CD4-positive, alpha-beta memory T cell (primary cell): ENCODE measurements at regions of chr16 and their contacts with region 1.

Region 1: GRCh38 chr16:10944249-10945064 is at the start of gene CLEC16A:
- DNase-seq: peak; percentile 94 to 97 (median 95)
- H3K4me3 ChIP-seq: peak within 1 kb of the TSS; percentile 81 to 89
- H3K4me3 Mint-ChIP-seq: peak within 1 kb of the TSS; percentile 83 to 96 (median 90)
- H3K27ac ChIP-seq: peak within 1 kb of the TSS; percentile 83
- H3K27ac Mint-ChIP-seq: peak within 1 kb of the TSS; percentile 66 to 94 (median 88)
- H3K4me1 ChIP-seq: peaks cover 74% of the 10 kb centered on the region
- H3K4me1 Mint-ChIP-seq: peaks cover 49 to 86% (median 67%) of the 10 kb centered on the region in 4 donors
- H3K27me3 ChIP-seq: no peaks in the 10 kb centered on the region
- H3K27me3 Mint-ChIP-seq: no peaks in the 10 kb centered on the region
- total RNA-seq, gene CLEC16A: 24.8 to 28.4 TPM

Region 2: DNA sequence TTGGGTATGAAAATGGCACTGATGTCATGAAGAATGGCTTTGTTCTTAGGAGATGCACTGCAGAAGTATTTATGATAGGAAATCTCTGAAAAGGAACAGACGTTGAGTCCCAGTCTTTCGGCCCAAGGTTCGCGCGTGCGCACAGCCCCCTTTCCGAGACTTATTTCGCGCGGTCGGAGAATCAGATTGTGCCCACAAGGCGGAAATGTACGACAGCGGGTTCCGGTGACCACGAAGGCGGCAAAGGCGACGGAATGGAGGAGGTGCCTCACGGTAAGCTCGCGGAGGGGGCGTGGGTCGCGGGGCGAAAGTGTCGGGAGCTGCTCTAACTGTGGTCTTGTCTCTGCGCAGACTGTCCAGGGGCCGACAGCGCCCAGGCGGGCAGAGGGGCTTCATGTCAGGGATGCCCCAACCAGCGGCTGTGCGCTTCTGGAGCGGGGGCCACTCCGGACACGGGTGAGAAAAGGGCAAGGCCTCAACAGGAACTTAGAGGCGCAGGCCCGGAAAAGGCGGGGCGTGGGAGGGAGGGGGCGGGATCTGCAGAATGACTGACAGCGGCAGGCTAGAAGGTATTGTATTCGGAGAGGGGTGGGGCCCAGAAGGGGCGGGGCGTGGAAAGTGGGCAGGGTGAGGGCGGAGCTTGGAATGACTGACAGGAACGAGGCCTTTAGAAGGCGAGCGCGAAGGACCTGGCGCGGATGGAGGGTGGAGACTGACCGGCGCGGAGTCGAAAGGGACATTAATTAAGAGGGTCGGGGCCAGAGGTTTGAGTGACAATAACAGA is 200.7 kb before region 1 on chr16 and contains the start of gene NUBP1:
- CTCF ChIA-PET with region 1: no interaction called
- POLR2A ChIA-PET with region 1: interaction called, 14 read pairs
- intact Hi-C with region 1: loop called (anchors 1 kb)
- DNase-seq: peak; percentile 98 to 100 (median 98)
- H3K4me3 ChIP-seq: peak within 1 kb of the TSS; percentile 63 to 81
- H3K4me3 Mint-ChIP-seq: peak within 1 kb of the TSS; percentile 90 to 97 (median 95)
- H3K27ac ChIP-seq: peak within 1 kb of the TSS; percentile 92
- H3K27ac Mint-ChIP-seq: peak within 1 kb of the TSS; percentile 93 to 100 (median 99)
- H3K4me1 ChIP-seq: peaks cover 19% of the 10 kb centered on the region
- H3K4me1 Mint-ChIP-seq: peaks cover 16 to 30% (median 24%) of the 10 kb centered on the region in 4 donors
- H3K27me3 ChIP-seq: no peaks in the 10 kb centered on the region
- H3K27me3 Mint-ChIP-seq: no peaks in the 10 kb centered on the region
- total RNA-seq, gene NUBP1: 23.5 to 28.4 TPM

Region 3: DNA sequence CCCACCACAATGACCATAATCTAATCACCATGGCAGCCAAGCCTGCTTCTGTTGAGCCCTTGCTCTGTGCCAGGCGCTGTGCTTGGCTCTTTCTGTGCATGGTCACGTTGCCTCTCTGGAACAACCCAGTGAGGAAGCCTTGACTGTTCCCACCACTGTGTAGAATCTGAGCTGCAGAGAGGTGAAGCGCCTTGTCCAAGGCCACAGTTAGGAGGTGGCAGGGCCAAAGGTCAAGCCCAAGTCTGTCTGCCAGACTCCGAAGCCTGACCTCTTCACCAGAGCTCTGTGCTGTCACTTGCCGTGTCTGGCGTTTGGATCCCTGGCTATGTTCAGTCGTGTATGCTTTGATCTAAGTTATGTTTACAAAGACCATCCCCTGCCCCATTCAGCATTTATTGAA is 10.4 kb after region 1 on chr16:
- CTCF ChIA-PET with region 1: interaction called, 120 read pairs
- POLR2A ChIA-PET with region 1: interaction called, 6 read pairs
- intact Hi-C with region 1: no loop called
- DNase-seq: no peak
- H3K4me3 ChIP-seq: no peak overlapping the region
- H3K4me3 Mint-ChIP-seq: no peak overlapping the region
- H3K27ac ChIP-seq: no peak overlapping the region
- H3K27ac Mint-ChIP-seq: peak overlapping the region in 5 of 7 donors; percentile 3 to 77 (median 11)
- H3K4me1 ChIP-seq: peaks cover 26% of the 10 kb centered on the region
- H3K4me1 Mint-ChIP-seq: peaks cover 20 to 50% (median 29%) of the 10 kb centered on the region in 4 donors
- H3K27me3 ChIP-seq: no peaks in the 10 kb centered on the region
- H3K27me3 Mint-ChIP-seq: no peaks in the 10 kb centered on the region

Region 4: GRCh38 chr16:10988164-10988803 is 43.8 kb after region 1 on chr16:
- CTCF ChIA-PET with region 1: no interaction called
- POLR2A ChIA-PET with region 1: no interaction called
- intact Hi-C with region 1: no loop called
- DNase-seq: peak in 2 of 5 donors; percentile 7 to 10
- H3K4me3 ChIP-seq: peak overlapping the region in 1 of 2 donors; percentile 32
- H3K4me3 Mint-ChIP-seq: peak overlapping the region; percentile 50 to 87 (median 73)
- H3K27ac ChIP-seq: peak overlapping the region; percentile 34
- H3K27ac Mint-ChIP-seq: peak overlapping the region; percentile 1 to 85 (median 48)
- H3K4me1 ChIP-seq: peaks cover 33% of the 10 kb centered on the region
- H3K4me1 Mint-ChIP-seq: peaks cover 37 to 65% (median 53%) of the 10 kb centered on the region in 4 donors
- H3K27me3 ChIP-seq: no peaks in the 10 kb centered on the region
- H3K27me3 Mint-ChIP-seq: no peaks in the 10 kb centered on the region

Region 5: GRCh38 chr16:11345040-11345862 is 400.8 kb after region 1 on chr16 and contains the start of gene RMI2:
- CTCF ChIA-PET with region 1: no interaction called
- POLR2A ChIA-PET with region 1: no interaction called
- intact Hi-C with region 1: loop called (anchors 1 kb)
- DNase-seq: peak; percentile 93 to 97 (median 95)
- H3K4me3 ChIP-seq: peak within 1 kb of the TSS; percentile 49 to 84
- H3K4me3 Mint-ChIP-seq: peak within 1 kb of the TSS; percentile 83 to 91 (median 89)
- H3K27ac ChIP-seq: no peak within 1 kb of the TSS
- H3K27ac Mint-ChIP-seq: peak within 1 kb of the TSS; percentile 12 to 89 (median 78)
- H3K4me1 ChIP-seq: peaks cover 11% of the 10 kb centered on the region
- H3K4me1 Mint-ChIP-seq: peaks cover 5 to 10% (median 7%) of the 10 kb centered on the region in 4 donors
- H3K27me3 ChIP-seq: no peaks in the 10 kb centered on the region
- H3K27me3 Mint-ChIP-seq: no peaks in the 10 kb centered on the region
- total RNA-seq, gene RMI2: 1.5 to 1.8 TPM

Region 6: GRCh38 chr16:11851294-11852091 is 907.0 kb after region 1 on chr16 and contains the start of gene RSL1D1:
- CTCF ChIA-PET with region 1: no interaction called
- POLR2A ChIA-PET with region 1: no interaction called
- intact Hi-C with region 1: loop called (anchors 5 kb)
- DNase-seq: peak; percentile 92 to 97 (median 95)
- H3K4me3 ChIP-seq: peak within 1 kb of the TSS; percentile 76 to 96
- H3K4me3 Mint-ChIP-seq: peak within 1 kb of the TSS; percentile 98 to 99 (median 99)
- H3K27ac ChIP-seq: peak within 1 kb of the TSS; percentile 94
- H3K27ac Mint-ChIP-seq: peak within 1 kb of the TSS; percentile 97 to 99 (median 98)
- H3K4me1 ChIP-seq: peaks cover 54% of the 10 kb centered on the region
- H3K4me1 Mint-ChIP-seq: peaks cover 27 to 77% (median 47%) of the 10 kb centered on the region in 4 donors
- H3K27me3 ChIP-seq: no peaks in the 10 kb centered on the region
- H3K27me3 Mint-ChIP-seq: no peaks in the 10 kb centered on the region
- total RNA-seq, gene RSL1D1: 180 to 206 TPM

Region 7: DNA sequence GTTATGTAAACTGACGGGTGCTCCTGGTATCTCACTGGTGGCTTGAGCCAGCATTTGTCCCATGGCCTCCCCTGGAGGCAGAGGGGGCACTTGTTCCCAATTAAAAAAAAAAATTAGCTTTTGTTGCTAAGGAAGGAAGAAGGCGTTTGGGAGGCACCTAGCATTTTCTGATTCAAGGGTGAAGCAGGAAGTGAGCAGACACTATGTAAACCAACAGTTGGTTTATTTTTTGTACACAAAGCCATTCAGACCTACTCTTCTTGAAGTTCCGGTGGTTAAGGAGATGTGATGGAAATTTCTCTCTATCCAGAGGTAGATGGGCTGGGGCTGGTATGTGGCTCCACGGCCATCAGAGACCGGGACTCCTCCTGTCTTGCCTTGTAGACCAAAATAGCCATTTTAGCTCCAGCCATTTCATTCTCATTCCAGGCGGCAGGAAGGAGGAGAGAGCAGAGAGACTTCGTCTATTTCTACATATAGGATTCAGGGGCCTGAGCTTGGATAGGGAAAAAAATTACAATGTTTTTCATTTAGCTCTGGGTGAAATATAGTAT is 1135.0 kb after region 1 on chr16:
- CTCF ChIA-PET with region 1: no interaction called
- POLR2A ChIA-PET with region 1: no interaction called
- intact Hi-C with region 1: loop called (anchors 5 kb)
- DNase-seq: peak in 4 of 5 donors; percentile 17 to 49 (median 43)
- H3K4me3 ChIP-seq: peak overlapping the region; percentile 2 to 6
- H3K4me3 Mint-ChIP-seq: peak overlapping the region; percentile 71 to 91 (median 84)
- H3K27ac ChIP-seq: peak overlapping the region; percentile 58
- H3K27ac Mint-ChIP-seq: peak overlapping the region; percentile 91 to 99 (median 97)
- H3K4me1 ChIP-seq: peaks cover 71% of the 10 kb centered on the region
- H3K4me1 Mint-ChIP-seq: peaks cover 51 to 89% (median 67%) of the 10 kb centered on the region in 4 donors
- H3K27me3 ChIP-seq: no peaks in the 10 kb centered on the region
- H3K27me3 Mint-ChIP-seq: no peaks in the 10 kb centered on the region